ENCODE measurements at regions of chr17 and their contacts with region 1.

Region 1: DNA sequence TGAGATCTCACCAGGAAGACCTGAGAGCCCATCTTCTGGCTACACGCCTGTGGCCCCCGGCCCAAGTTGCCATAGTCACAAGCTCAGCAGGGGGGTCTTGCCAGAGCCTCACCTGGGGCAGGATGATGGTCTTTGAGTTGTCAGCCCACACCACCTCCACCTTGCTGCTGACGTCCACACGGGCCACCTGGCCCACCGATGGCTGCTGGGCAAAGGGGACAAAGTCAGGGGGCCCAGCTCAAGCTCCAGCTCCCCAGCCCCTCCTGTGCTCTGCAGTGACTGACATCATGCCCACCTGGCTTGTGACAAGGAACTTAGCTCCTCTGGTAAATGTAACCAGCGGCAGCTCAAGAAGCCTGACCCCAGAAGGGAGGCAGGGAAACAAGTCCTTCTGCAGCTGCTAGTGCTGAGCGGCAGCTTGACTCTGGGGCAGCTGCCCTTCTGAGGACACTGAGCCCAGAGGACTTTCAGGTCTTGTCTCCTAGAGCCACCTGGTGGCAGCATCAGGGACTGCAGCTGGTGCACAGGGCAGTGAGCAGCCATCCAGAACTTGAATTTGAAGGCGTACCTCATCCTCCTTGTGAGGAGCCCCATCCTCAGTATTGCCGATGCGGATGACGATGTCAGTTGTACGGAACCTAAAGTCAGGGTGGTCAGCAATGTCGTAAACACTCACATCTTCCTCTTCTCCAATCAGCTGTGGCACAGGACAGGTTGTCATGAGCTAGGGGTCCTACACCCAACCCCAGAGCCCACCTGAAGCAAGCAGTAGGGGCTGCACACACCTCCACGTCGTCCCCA is 13.5 kb downstream of the SPHK1 start:
- DNase-seq: peak; percentile 89
- ATAC-seq: peak; percentile 89
- H3K4me3 Mint-ChIP-seq: no peak overlapping the region
- H3K27ac Mint-ChIP-seq: peak overlapping the region; percentile 47
- H3K4me1 Mint-ChIP-seq: no peaks in the 10 kb centered on the region
- H3K27me3 Mint-ChIP-seq: no peaks in the 10 kb centered on the region

Region 2: GRCh38 chr17:76304226-76305134 is 93.4 kb before region 1 on chr17:
- CTCF ChIA-PET with region 1: interaction called, 142 read pairs
- POLR2A ChIA-PET with region 1: interaction called, 4 read pairs
- DNase-seq: no peak
- ATAC-seq: no peak
- H3K4me3 Mint-ChIP-seq: no peak overlapping the region
- H3K27ac Mint-ChIP-seq: peak overlapping the region; percentile 62
- H3K4me1 Mint-ChIP-seq: peaks cover 5% of the 10 kb centered on the region
- H3K27me3 Mint-ChIP-seq: no peaks in the 10 kb centered on the region

Region 3: DNA sequence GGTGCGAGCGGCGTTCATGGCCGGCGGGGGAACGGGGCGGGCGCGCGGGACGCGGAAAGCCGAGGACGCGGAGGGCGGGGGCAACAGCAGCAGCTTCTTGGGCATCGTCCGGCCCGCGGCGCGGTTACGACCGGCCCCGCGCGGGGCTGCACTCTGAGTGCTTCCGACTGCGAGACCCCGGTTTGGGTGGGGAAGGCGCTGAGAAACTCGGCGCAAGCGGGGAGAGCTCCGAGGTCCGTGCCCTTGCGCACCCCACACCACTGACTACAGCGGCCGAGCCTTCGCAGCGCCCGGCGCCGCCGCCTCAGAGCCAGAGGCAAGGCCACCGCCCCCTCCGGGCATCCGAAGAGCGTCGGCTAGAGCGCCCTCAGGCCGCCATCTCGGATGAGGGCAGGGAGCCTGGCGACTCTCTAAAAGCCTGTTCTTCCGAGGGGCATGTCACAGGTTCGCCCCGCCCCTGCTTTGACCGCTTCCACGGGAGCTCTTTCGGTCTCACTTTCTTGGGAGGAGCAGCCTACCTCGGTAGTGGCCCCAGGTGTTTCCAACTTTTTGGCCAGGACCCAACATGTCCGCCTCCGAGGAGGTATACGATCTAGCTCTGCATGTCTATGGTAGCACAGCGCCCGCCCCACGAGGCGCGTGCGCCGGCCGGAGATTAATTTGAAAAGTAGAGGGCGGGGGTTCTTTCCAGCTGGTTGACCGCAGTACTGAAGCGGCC is 44.1 kb before region 1 on chr17 and contains the start of gene PRPSAP1:
- CTCF ChIA-PET with region 1: interaction called, 33 read pairs
- POLR2A ChIA-PET with region 1: no interaction called
- DNase-seq: peak; percentile 88
- ATAC-seq: peak; percentile 97
- H3K4me3 Mint-ChIP-seq: peak within 1 kb of the TSS; percentile 98
- H3K27ac Mint-ChIP-seq: peak within 1 kb of the TSS; percentile 100
- H3K4me1 Mint-ChIP-seq: peaks cover 28% of the 10 kb centered on the region
- H3K27me3 Mint-ChIP-seq: no peaks in the 10 kb centered on the region
- total RNA-seq, gene PRPSAP1: 64.2 to 74.1 TPM

Region 4: DNA sequence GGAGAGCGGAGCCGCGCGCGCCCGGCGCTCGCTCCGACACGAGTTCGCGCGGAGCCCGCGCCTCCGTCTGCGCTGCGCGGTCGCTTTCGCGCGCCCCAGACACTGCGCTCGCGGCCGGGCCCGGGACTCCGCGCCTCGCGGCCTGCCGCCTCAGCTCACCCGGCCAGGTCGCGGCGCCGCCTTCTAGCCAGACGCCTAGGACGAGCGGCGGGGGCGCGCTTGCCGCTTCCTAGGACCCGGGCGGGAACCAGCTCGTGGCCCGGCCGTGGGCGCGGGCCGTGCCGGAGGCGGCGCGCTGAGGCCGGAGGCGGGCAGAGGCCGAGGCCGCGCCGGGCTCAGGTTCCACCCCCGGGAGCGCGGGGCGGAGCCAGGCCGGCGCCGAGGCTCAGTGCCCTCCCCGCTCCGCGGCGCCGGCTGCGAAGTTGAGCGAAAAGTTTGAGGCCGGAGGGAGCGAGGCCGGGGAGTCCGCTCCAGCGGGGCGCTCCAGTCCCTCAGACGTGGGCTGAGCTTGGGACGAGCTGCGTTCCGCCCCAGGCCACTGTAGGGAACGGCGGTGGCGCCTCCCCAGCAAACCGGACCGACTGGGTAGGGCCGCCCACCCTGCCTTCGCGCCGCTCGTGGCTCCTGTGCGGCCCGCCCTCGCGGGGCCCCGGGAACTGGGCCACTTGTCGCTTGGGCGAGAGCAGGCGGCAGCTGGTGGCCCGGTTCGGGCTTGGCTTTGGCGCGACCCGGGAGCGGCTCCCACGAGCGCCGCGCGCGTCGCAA is 13.5 kb before region 1 on chr17 and contains the start of gene SPHK1:
- CTCF ChIA-PET with region 1: interaction called, 124 read pairs
- POLR2A ChIA-PET with region 1: interaction called, 3 read pairs
- DNase-seq: peak; percentile 77
- ATAC-seq: peak; percentile 75
- H3K4me3 Mint-ChIP-seq: peak within 1 kb of the TSS; percentile 82
- H3K27ac Mint-ChIP-seq: peak within 1 kb of the TSS; percentile 88
- H3K4me1 Mint-ChIP-seq: peaks cover 24% of the 10 kb centered on the region
- H3K27me3 Mint-ChIP-seq: no peaks in the 10 kb centered on the region
- total RNA-seq, gene SPHK1: 3.8 to 4.7 TPM

Region 5: DNA sequence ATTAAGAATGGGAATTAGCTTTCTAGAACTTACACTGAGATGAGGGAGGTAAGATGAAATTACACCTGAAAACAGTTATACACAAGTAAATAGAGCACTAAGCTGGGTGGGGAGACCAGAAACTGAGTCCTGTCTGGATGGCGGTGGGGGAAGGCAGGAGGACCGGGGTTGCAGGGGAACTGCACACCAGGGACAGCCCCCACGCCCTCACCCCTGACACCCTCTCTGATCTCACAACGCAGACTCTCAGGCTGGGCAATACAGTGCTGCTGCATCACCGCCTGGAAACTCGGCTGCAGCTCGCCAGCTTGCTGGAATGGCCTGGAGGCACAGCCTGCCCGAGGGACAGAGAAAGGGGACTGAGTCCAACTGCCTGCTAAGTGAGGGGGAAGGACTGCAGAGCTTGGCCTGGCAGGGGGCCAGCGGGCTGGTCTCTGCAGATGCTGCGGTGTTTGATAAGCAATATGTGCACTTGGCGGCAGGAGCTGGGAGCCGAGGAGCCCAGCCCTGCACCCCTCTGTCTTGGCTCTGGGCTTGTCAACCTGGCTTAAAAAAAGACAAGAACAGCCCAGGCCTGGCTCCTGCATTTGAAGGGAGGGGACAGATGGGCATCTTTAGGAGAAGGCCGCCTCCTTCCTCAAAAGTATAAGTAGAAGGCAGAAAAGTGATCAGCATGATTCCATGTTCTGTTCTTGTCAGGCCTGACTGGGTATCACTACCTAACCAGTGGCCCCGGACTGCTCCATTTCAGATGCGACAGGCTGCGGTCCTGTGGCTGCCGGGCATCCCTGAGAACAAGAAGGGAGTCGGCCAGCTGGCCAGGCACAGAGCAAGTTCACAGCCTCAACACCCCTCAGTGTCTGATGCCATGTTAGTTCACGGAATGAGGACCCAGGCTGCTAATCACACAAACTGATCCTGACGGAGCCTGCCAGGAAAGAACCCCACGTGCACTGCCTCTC is 16.7 kb after region 1 on chr17:
- CTCF ChIA-PET with region 1: interaction called, 34 read pairs
- POLR2A ChIA-PET with region 1: no interaction called
- DNase-seq: no peak
- ATAC-seq: no peak
- H3K4me3 Mint-ChIP-seq: no peak overlapping the region
- H3K27ac Mint-ChIP-seq: no peak overlapping the region
- H3K4me1 Mint-ChIP-seq: no peaks in the 10 kb centered on the region
- H3K27me3 Mint-ChIP-seq: no peaks in the 10 kb centered on the region

Region 6: DNA sequence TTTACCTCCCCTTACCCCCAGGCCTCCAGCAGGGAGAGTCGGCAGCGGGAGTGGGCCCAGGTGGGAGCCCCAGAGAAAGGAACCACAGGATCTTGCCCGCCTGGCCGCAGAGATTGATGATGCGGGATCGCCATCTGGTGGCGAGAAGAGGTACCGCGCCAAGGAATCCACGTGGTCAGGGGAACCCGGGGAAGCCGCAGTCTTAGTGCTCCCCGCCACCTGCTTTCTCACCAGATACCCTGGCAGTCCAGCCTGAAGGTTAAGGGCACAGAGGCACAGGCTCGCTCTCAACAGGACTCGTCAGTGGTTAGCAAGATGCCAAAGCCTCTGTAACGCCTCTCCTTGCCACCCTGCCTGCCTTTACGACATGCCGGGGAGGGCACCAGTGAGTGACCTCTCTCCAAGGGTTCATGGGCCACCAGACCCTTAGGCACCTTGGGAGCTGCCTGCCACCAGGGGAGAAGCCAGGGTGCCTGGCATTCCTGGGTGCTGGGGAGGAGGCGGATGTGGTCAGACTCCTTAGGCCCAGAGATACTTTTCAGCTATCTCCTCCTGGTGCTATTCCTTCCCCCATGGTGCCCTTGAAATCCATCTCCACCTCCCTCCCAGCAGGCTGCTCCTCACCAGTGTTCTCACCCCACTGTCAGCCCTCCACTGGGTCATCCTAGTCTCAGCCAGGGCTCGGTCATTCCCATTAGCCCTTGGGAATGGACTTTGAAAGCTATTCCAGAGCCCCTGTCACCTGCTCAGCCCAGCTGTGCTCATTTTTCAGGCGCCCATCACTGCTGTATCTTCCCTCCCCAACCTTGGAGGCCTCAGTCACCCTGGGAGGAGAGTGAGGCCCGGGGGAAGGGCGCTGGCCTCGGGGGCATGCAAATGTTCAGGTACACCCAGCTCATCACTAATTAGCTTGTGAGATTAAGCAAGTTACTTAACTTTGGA is 108.8 kb after region 1 on chr17:
- CTCF ChIA-PET with region 1: interaction called, 13 read pairs
- POLR2A ChIA-PET with region 1: no interaction called
- DNase-seq: peak; percentile 91
- ATAC-seq: peak; percentile 85
- H3K4me3 Mint-ChIP-seq: no peak overlapping the region
- H3K27ac Mint-ChIP-seq: peak overlapping the region; percentile 49
- H3K4me1 Mint-ChIP-seq: peaks cover 43% of the 10 kb centered on the region
- H3K27me3 Mint-ChIP-seq: peaks cover 4% of the 10 kb centered on the region

Measured in activated CD8-positive, alpha-beta T cell treated with anti-CD3 and anti-CD28 coated beads, Interleukin-2, amount 10 ng/mL, durations not matched to agents 7 days and 5 days (primary cell).